AG04449 (cell line): ENCODE measurements at regions of chr7 and their contacts with region 1.

Region 1: GRCh38 chr7:113727486-113727885 is 191.3 kb downstream of the PPP1R3A start:
- DNase-seq: no peak
- H3K4me3 ChIP-seq: no peak overlapping the region
- CTCF ChIP-seq: no peak

Region 2: GRCh38 chr7:113710310-113711106 is 17.0 kb before region 1 on chr7:
- CTCF ChIA-PET with region 1: interaction called, 14 read pairs
- POLR2A ChIA-PET with region 1: no interaction called
- DNase-seq: peak; percentile 45
- H3K4me3 ChIP-seq: no peak overlapping the region
- CTCF ChIP-seq: peak; percentile 86